Activated B cell treated with CpG ODN at 0.5 μM for 24 hours (primary cell): ENCODE measurements at regions of chr1 and their contacts with region 1.

Region 1: DNA sequence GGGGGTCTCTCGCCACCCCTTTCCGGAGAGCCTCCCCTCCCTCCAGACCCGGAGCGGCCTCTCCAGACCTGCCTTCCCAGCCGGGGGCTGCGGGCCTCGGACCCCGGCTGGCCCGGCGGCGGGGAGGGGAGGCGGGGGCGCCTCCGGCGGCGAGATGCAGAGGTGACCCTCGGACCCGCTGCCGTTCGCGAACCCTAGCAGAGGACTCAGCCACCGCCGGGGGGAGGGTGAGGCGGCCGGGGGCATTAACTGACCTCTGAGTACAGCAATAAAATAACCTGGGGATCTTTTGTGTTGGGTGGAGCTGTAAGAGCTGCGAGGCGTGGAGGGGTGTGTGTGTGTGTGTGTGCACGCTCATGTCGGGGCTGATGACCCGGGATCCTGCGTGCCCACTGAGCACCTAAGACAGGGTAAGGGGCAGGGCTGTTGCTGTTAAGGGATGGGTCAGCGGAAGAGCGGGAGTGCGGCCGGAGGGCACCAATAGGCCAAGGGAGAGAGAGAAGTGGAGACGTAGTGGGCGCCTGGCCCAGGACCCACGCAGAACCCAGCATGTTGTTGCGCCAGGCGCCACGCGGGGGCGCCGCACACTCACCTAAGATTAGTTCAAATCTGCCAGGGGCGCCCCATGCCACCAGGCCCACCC is 6.3 kb downstream of the HAPLN2 start:
- DNase-seq: peak; percentile 66
- ATAC-seq: peak; percentile 71
- H3K4me3 Mint-ChIP-seq: peak overlapping the region; percentile 74
- H3K27ac Mint-ChIP-seq: peak overlapping the region; percentile 3
- H3K4me1 Mint-ChIP-seq: peaks cover 12% of the 10 kb centered on the region
- H3K27me3 Mint-ChIP-seq: peaks cover 32% of the 10 kb centered on the region
- CTCF ChIP-seq: peak; percentile 27

Region 2: GRCh38 chr1:156583821-156584622 is 41.5 kb before region 1 on chr1:
- CTCF ChIA-PET with region 1: interaction called, 4 read pairs
- POLR2A ChIA-PET with region 1: interaction called, 7 read pairs
- intact Hi-C with region 1: loop called (anchors 5 kb)
- DNase-seq: no peak
- ATAC-seq: peak; percentile 54
- H3K4me3 Mint-ChIP-seq: peak overlapping the region; percentile 53
- H3K27ac Mint-ChIP-seq: peak overlapping the region; percentile 99
- H3K4me1 Mint-ChIP-seq: peaks cover 33% of the 10 kb centered on the region
- H3K27me3 Mint-ChIP-seq: no peaks in the 10 kb centered on the region
- CTCF ChIP-seq: no peak

Region 3: DNA sequence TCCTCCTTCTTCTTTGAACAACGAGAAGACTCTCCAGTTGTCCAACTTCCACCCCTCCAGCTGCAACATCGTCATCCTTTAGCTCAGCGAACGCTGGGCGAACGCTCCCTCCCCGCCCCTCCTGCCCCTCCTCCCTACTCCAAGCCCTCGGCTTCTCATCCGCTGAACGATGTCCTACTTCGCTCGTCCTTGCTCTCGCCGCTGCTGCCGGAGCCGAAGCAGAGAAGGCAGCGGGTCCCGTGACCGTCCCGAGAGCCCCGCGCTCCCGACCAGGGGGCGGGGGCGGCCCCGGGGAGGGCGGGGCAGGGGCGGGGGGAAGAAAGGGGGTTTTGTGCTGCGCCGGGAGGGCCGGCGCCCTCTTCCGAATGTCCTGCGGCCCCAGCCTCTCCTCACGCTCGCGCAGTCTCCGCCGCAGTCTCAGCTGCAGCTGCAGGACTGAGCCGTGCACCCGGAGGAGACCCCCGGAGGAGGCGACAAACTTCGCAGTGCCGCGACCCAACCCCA is 16.3 kb after region 1 on chr1 and contains the start of gene BCAN:
- CTCF ChIA-PET with region 1: interaction called, 5 read pairs
- POLR2A ChIA-PET with region 1: no interaction called
- intact Hi-C with region 1: loop called (anchors 2 kb)
- DNase-seq: no peak
- ATAC-seq: peak; percentile 51
- H3K4me3 Mint-ChIP-seq: peak within 1 kb of the TSS; percentile 68
- H3K27ac Mint-ChIP-seq: no peak within 1 kb of the TSS
- H3K4me1 Mint-ChIP-seq: peaks cover 20% of the 10 kb centered on the region
- H3K27me3 Mint-ChIP-seq: peaks cover 78% of the 10 kb centered on the region
- CTCF ChIP-seq: no peak
- total RNA-seq, gene BCAN: 0.27 and 0.51 TPM in 2 replicates

Region 4: GRCh38 chr1:156648951-156649350 is 23.4 kb after region 1 on chr1:
- CTCF ChIA-PET with region 1: interaction called, 12 read pairs
- POLR2A ChIA-PET with region 1: no interaction called
- intact Hi-C with region 1: no loop called
- DNase-seq: no peak
- ATAC-seq: no peak
- H3K4me3 Mint-ChIP-seq: no peak overlapping the region
- H3K27ac Mint-ChIP-seq: no peak overlapping the region
- H3K4me1 Mint-ChIP-seq: no peaks in the 10 kb centered on the region
- H3K27me3 Mint-ChIP-seq: peaks cover 74% of the 10 kb centered on the region
- CTCF ChIP-seq: no peak

Region 5: GRCh38 chr1:156677616-156678596 is 52.3 kb after region 1 on chr1:
- CTCF ChIA-PET with region 1: interaction called, 63 read pairs
- POLR2A ChIA-PET with region 1: interaction called, 3 read pairs
- intact Hi-C with region 1: loop called (anchors 1 kb)
- DNase-seq: no peak
- ATAC-seq: peak; percentile 49
- H3K4me3 Mint-ChIP-seq: peak overlapping the region; percentile 32
- H3K27ac Mint-ChIP-seq: no peak overlapping the region
- H3K4me1 Mint-ChIP-seq: peaks cover 27% of the 10 kb centered on the region
- H3K27me3 Mint-ChIP-seq: peaks cover 69% of the 10 kb centered on the region
- CTCF ChIP-seq: no peak

Region 6: GRCh38 chr1:156866249-156866909 is 240.8 kb after region 1 on chr1:
- CTCF ChIA-PET with region 1: no interaction called
- POLR2A ChIA-PET with region 1: no interaction called
- intact Hi-C with region 1: no loop called
- DNase-seq: no peak
- ATAC-seq: no peak
- H3K4me3 Mint-ChIP-seq: no peak overlapping the region
- H3K27ac Mint-ChIP-seq: no peak overlapping the region
- H3K4me1 Mint-ChIP-seq: peaks cover 2% of the 10 kb centered on the region
- H3K27me3 Mint-ChIP-seq: peaks cover 43% of the 10 kb centered on the region
- CTCF ChIP-seq: no peak

Region 7: GRCh38 chr1:157301477-157302198 is 676.1 kb after region 1 on chr1:
- CTCF ChIA-PET with region 1: no interaction called
- POLR2A ChIA-PET with region 1: no interaction called
- intact Hi-C with region 1: no loop called
- DNase-seq: no peak
- ATAC-seq: no peak
- H3K4me3 Mint-ChIP-seq: no peak overlapping the region
- H3K27ac Mint-ChIP-seq: no peak overlapping the region
- H3K4me1 Mint-ChIP-seq: no peaks in the 10 kb centered on the region
- H3K27me3 Mint-ChIP-seq: peaks cover 8% of the 10 kb centered on the region
- CTCF ChIP-seq: no peak